ENCODE measurements at regions of chr7 and their contacts with region 1.

Region 1: GRCh38 chr7:41977151-41977651 is 259.8 kb downstream of the GLI3 start:
- DNase-seq: peak; percentile 54
- H3K4me3 ChIP-seq: no peak overlapping the region
- H3K27ac ChIP-seq: no peak overlapping the region
- H3K27me3 ChIP-seq: no peaks in the 10 kb centered on the region
- CTCF ChIP-seq: peak; percentile 85

Region 2: DNA sequence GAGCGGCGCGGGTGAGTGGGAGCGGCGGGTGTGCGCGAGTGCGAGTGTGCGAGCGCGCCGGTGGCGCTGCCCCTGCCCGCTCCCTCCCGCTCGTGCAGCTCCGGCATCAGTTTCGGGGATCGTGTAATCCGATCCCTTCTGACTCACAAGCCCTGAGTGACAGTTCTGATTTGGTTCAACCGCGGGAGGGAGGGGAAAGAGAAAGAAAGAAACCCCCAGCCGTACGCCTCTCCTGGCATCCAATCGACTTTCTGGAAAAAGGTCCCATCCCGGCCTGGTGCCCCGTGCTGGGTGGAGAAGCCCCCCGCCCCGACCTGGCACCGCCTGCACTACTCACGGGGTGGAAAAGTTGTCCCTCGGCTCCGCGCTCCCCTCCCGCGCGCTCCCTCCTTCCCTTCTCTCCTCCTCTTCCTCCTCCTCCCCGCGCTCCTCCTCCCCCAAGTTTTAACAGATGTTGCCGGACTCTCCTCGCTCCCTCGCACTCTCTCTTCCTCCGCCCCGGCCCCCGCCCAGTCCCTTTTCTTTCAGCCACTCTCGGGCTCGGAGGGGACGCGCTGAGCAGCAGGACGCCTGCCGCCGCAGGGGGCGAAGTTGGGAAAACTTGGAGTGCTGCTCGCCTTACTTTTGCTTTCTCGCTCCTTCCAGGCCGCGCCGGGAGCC is 260.1 kb after region 1 on chr7 and contains the start of gene GLI3:
- in situ Hi-C with region 1: loop called (anchors 25 kb)
- DNase-seq: peak; percentile 87
- H3K4me3 ChIP-seq: peak within 1 kb of the TSS; percentile 85
- H3K27ac ChIP-seq: peak within 1 kb of the TSS; percentile 80
- H3K27me3 ChIP-seq: no peaks in the 10 kb centered on the region
- CTCF ChIP-seq: peak; percentile 57

Region 3: GRCh38 chr7:42315631-42316030 is 338.4 kb after region 1 on chr7:
- in situ Hi-C with region 1: no loop called
- DNase-seq: peak; percentile 86
- H3K4me3 ChIP-seq: no peak overlapping the region
- H3K27ac ChIP-seq: no peak overlapping the region
- H3K27me3 ChIP-seq: peaks cover 3% of the 10 kb centered on the region
- CTCF ChIP-seq: no peak

Region 4: GRCh38 chr7:42690794-42691639 is 713.8 kb after region 1 on chr7:
- in situ Hi-C with region 1: loop called (anchors 25 kb)
- DNase-seq: peak; percentile 55
- H3K4me3 ChIP-seq: no peak overlapping the region
- H3K27ac ChIP-seq: no peak overlapping the region
- H3K27me3 ChIP-seq: no peaks in the 10 kb centered on the region
- CTCF ChIP-seq: peak; percentile 80

Region 5: DNA sequence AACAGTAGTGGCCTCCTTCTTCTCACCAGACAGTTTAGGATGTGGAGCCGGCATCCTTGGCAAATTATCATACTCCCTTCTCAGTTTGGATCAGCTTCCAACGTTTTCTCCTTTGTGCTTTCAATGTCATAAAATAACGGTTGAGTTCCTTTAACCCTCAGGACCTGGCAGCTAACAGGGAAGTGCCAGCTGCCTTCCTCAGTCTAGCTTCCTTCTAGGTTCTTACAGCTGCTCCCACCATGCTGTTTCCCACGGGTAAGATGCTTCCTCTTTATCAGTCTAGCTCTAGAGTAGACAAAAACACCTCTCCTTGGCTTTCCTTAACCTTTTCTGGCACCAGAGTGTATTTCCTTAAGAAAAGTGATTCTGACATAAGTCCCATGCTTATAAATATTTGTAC is 1814.5 kb after region 1 on chr7:
- in situ Hi-C with region 1: no loop called
- DNase-seq: no peak
- H3K4me3 ChIP-seq: no peak overlapping the region
- H3K27ac ChIP-seq: no peak overlapping the region
- H3K27me3 ChIP-seq: no peaks in the 10 kb centered on the region
- CTCF ChIP-seq: no peak

Measured in brain microvascular endothelial cell (primary cell).